ENCODE measurements at regions of chr2 and their contacts with region 1.

Region 1: DNA sequence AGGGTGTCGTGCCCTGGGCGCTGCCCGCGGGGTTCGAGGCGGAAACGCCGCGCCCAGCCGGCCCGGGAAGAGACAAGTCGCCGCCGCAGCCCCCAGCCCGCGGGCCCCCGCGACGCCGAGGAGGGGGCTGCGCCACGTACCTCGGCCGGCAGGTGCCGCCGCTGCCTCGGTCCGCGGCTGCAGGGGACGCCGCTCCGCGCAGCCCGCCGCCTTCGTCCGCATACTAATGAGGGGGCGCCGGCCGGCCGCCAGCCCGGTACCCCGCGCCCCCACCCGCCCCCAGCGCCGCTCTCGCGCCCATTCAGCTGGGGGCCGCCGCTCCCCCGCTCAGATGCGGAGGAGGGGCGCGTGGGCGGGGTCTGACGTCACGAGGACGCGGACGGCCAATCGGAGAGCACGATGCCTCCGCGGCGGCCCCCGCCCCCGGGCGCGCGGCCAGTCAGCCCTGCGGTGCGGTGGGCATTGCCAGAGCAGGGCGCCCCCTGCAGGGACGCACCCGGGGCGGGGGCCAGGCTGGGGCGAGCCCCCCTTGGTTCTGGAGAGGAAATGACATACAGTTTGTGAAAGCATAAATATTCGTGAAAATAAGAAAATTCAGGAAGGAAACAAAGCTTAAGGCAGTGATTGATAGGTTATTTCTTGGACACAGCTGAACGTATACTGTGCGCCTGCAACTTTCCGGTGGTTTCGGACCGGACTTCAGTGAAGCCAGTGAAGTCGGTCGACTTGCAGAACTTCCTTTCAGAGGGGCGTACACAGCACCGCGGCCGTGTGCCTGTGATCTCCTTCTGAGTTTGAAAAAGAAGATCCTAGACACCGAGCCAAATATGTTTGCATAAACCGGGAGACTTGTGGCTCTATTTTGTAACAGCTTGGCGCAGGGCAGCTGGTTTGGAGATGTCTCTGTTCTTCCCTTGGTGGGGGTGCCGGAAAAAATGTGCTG is at the start of gene ST3GAL5:
- DNase-seq: peak; percentile 92
- H3K4me3 Mint-ChIP-seq: peak within 1 kb of the TSS; percentile 88
- H3K27ac Mint-ChIP-seq: peak within 1 kb of the TSS; percentile 39
- H3K4me1 Mint-ChIP-seq: peaks cover 18% of the 10 kb centered on the region
- H3K27me3 Mint-ChIP-seq: peaks cover 59% of the 10 kb centered on the region
- CTCF ChIP-seq: peak; percentile 81
- total RNA-seq, gene ST3GAL5: 3.5 and 3.8 TPM in 2 replicates

Region 2: DNA sequence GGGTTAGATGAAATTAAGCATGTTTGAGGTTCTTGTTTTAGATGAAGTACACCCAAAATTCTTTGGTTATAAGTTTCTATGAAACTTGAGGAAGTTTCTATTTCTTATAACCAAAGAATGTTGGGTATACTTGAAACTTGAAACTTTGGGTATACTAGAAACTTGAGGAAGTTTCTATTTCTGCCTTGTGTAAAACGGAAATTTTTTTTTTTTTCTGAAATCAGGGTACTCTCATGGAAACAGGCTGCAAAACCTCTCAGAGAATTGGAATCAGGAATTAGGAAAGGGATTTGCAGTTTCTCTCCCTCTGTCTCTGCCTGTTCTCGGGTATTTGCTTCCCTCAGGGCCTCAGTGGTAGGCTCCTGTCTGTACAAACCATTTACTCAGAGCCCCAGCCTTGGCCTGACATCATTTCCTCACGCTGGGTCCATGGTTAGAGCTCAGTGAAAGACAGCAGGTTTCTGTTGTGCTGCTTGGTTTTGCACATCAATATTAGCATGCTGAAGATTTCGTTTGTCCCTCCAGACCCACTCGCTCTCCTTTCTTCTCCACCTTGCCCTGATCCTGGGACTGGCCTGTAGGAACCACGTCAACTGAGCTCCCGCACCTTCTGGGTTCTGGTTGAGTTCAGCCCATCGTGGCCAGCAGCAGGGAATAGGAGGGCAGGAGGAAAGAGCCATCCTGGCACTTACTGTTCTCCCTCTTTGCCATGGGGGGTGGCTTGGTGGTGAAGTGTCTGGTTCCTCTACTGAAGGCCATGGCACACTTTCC is 110.3 kb after region 1 on chr2:
- CTCF ChIA-PET with region 1: no interaction called
- intact Hi-C with region 1: loop called (anchors 5 kb)
- DNase-seq: no peak
- H3K4me3 Mint-ChIP-seq: no peak overlapping the region
- H3K27ac Mint-ChIP-seq: no peak overlapping the region
- H3K4me1 Mint-ChIP-seq: peaks cover 7% of the 10 kb centered on the region
- H3K27me3 Mint-ChIP-seq: peaks cover 16% of the 10 kb centered on the region
- CTCF ChIP-seq: no peak

Region 3: DNA sequence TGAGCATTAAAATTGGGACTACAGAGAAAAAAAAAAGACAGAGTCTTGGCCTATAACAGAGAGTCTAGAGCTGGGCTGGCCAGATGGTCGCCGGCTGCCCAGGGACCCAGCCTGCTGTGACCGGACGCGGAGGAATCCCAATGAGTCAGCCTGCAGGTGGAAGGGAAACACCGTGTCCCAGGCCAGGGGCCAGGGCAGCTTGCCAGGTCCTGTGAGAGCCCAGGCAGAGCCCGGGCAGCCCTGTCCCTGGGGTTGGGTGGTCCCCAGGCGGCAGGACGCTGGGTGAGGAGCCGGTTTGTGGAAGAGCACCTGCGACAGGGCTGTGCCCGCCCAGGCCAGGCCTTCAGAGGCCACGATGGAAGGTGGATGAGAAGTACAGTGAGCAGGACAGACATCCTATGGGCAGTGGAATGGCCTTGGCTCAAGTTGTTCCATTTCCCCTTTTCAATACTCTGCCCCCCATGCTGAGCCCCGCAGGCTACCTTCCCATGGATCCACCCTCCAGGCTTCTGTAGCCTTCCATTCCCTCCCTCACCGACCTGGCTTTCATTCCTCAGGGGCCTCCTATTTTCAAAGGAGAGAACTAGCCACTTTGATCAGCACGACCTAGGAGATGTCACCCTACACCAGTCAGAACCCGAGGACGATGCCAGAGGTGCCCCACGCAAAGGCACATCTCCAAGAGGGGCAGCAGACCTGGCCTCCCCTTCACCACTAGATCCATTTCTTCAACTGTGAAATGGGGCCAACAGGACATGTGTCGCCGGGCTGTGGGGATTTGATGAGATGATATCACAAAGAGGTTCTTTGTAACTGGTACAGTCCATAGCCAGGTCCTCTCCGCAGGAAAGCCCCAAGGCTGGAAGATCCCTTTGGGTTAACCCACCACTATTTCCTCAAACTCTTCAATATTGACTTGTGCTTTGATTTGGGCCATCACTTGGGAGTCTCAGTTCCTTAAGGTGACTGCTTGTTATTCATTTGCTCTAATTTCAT is 129.2 kb after region 1 on chr2:
- CTCF ChIA-PET with region 1: no interaction called
- intact Hi-C with region 1: loop called (anchors 5 kb)
- DNase-seq: peak; percentile 71
- H3K4me3 Mint-ChIP-seq: no peak overlapping the region
- H3K27ac Mint-ChIP-seq: no peak overlapping the region
- H3K4me1 Mint-ChIP-seq: no peaks in the 10 kb centered on the region
- H3K27me3 Mint-ChIP-seq: peaks cover 3% of the 10 kb centered on the region
- CTCF ChIP-seq: no peak

Region 4: GRCh38 chr2:86062043-86062442 is 173.1 kb after region 1 on chr2:
- CTCF ChIA-PET with region 1: no interaction called
- intact Hi-C with region 1: loop called (anchors 2 kb)
- DNase-seq: no peak
- H3K4me3 Mint-ChIP-seq: no peak overlapping the region
- H3K27ac Mint-ChIP-seq: peak overlapping the region; percentile 11
- H3K4me1 Mint-ChIP-seq: peaks cover 18% of the 10 kb centered on the region
- H3K27me3 Mint-ChIP-seq: no peaks in the 10 kb centered on the region
- CTCF ChIP-seq: no peak

Region 5: GRCh38 chr2:86079981-86080911 is 191.3 kb after region 1 on chr2:
- CTCF ChIA-PET with region 1: no interaction called
- intact Hi-C with region 1: loop called (anchors 5 kb)
- DNase-seq: peak; percentile 77
- H3K4me3 Mint-ChIP-seq: no peak overlapping the region
- H3K27ac Mint-ChIP-seq: no peak overlapping the region
- H3K4me1 Mint-ChIP-seq: no peaks in the 10 kb centered on the region
- H3K27me3 Mint-ChIP-seq: no peaks in the 10 kb centered on the region
- CTCF ChIP-seq: peak; percentile 71

Measured in Calu3 (cell line).